ENCODE measurements at regions of chr21 and their contacts with region 1.

Region 1: DNA sequence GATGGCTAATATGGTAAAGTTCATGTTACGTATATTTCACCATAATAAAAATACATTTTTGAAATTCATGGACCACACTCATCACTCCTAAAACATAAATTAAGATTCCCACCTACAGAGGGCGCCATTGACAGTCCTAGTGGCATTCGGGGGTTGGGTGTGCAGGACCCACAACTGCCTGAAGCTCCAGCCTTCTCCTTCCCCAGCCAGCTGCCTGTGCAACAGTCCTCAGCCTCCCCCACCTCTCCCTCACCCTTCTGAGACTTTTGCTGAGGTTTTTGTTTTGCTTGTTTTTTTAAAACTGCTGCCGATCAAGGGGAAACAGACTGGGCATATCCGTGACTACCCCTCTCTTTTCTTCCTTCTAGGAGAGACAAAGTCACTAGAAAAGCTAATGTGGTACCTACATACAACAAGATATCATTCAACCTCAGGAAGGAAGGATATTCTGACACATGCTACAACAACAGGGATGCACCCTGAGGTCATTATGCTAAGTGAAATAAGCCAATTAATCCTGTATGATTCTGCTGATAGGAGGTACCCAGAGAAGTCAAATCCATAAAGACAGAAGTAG is 9.2 kb upstream of the EVA1C start:
- DNase-seq: peak; percentile 67
- H3K4me3 Mint-ChIP-seq: no peak overlapping the region
- H3K27ac Mint-ChIP-seq: no peak overlapping the region
- H3K4me1 Mint-ChIP-seq: no peaks in the 10 kb centered on the region
- H3K27me3 Mint-ChIP-seq: peaks cover 18% of the 10 kb centered on the region
- CTCF ChIP-seq: no peak

Region 2: GRCh38 chr21:31888936-31889371 is 514.3 kb before region 1 on chr21:
- CTCF ChIA-PET with region 1: no interaction called
- intact Hi-C with region 1: no loop called
- DNase-seq: peak; percentile 47
- H3K4me3 Mint-ChIP-seq: peak overlapping the region; percentile 46
- H3K27ac Mint-ChIP-seq: peak overlapping the region; percentile 91
- H3K4me1 Mint-ChIP-seq: peaks cover 4% of the 10 kb centered on the region
- H3K27me3 Mint-ChIP-seq: no peaks in the 10 kb centered on the region
- CTCF ChIP-seq: no peak

Region 3: GRCh38 chr21:32597205-32597604 is 193.9 kb after region 1 on chr21:
- CTCF ChIA-PET with region 1: interaction called, 16 read pairs
- intact Hi-C with region 1: loop called (anchors 1 kb)
- DNase-seq: no peak
- H3K4me3 Mint-ChIP-seq: no peak overlapping the region
- H3K27ac Mint-ChIP-seq: no peak overlapping the region
- H3K4me1 Mint-ChIP-seq: no peaks in the 10 kb centered on the region
- H3K27me3 Mint-ChIP-seq: no peaks in the 10 kb centered on the region
- CTCF ChIP-seq: no peak